Mammary epithelial cell (primary cell): ENCODE measurements at regions of chr3 and their contacts with region 1.

Region 1: DNA sequence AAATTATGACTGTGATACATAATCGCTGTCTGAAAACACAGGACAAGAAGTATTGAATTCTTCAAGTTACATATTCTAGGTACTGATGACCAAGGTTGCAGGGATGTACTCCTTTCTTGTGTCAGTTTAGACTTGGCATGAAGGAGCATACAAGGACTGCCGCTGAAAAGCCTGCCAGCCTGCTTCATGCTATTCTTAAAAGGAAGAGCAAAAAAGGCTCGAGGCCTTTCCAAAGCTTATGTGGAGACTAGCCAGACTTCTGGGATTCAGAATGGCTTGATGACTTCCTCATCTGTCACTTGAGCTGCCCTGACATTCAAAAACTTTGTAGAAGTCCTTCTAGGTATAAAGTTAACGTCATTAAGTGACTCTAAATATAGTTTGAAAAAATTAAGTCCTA is 92.0 kb downstream of the CADM2 start:
- DNase-seq: no peak
- H3K4me3 ChIP-seq: no peak overlapping the region
- H3K27ac ChIP-seq: no peak overlapping the region
- H3K4me1 ChIP-seq: no peaks in the 10 kb centered on the region
- H3K27me3 ChIP-seq: no peaks in the 10 kb centered on the region
- CTCF ChIP-seq: no peak

Region 2: DNA sequence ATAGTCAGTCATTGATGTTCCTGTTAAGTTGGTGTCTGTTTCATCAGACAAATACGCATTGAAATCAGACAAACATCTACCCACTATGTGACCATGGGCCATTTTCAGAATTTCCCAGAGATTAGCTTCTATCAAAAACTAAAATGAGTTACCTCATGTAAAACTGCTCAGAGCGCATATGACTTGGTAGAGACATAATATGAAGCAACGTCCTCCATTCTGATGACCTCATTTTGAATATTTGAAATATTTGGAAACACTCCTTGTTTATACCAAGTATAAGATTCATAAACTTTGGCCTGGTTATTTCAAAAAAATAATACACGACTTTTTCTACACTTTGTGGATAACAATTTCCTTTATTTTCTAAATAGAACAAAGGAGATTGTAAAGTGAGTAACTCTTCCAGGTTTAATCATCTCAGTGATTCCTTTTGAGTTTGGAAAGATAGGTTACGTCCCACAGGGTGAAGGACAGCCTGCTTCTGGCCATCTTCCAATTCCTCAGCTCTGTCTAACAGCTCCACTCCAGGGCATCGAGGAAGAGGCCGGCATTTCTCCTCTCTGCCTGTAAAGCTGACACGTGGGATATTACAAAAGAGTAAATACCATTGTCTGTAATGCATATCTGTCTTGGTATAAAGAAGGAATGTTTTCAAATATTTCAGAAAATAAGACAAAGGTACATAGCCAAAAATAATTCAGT is 30.5 kb after region 1 on chr3:
- CTCF ChIA-PET with region 1: no interaction called
- dilution Hi-C with region 1: no loop called
- in situ Hi-C with region 1: no loop called
- intact Hi-C with region 1: no loop called
- DNase-seq: no peak
- H3K4me3 ChIP-seq: no peak overlapping the region
- H3K27ac ChIP-seq: no peak overlapping the region
- H3K4me1 ChIP-seq: no peaks in the 10 kb centered on the region
- H3K27me3 ChIP-seq: no peaks in the 10 kb centered on the region
- CTCF ChIP-seq: no peak

Region 3: GRCh38 chr3:85533586-85533985 is 482.8 kb after region 1 on chr3:
- CTCF ChIA-PET with region 1: interaction called, 10 read pairs
- dilution Hi-C with region 1: no loop called
- in situ Hi-C with region 1: no loop called
- intact Hi-C with region 1: no loop called
- DNase-seq: no peak
- H3K4me3 ChIP-seq: no peak overlapping the region
- H3K27ac ChIP-seq: no peak overlapping the region
- H3K4me1 ChIP-seq: no peaks in the 10 kb centered on the region
- H3K27me3 ChIP-seq: no peaks in the 10 kb centered on the region
- CTCF ChIP-seq: no peak